Heart right ventricle (tissue), 16 donors: ENCODE measurements at regions of chr6 and their contacts with region 1.

Region 1: GRCh38 chr6:16964553-16965501 is 137.0 kb upstream of the STMND1 start:
- DNase-seq: peak; percentile 62 to 70
- ATAC-seq: peak; percentile 59 to 95 (median 92)
- H3K4me3 ChIP-seq: no peak overlapping the region
- H3K27ac ChIP-seq: no peak overlapping the region
- H3K4me1 ChIP-seq: peaks cover 0 to 7% (median 5%) of the 10 kb centered on the region in 9 donors
- H3K27me3 ChIP-seq: peaks cover 0 to 5% (median 0%) of the 10 kb centered on the region in 7 donors
- CTCF ChIP-seq: peak; percentile 75 to 94 (median 87)

Region 2: GRCh38 chr6:16332175-16332542 is 632.7 kb before region 1 on chr6:
- intact Hi-C with region 1: loop called in 4 of 10 experiments (anchors 10 kb)
- DNase-seq: peak; percentile 56 to 86
- ATAC-seq: peak; percentile 68 to 93 (median 80)
- H3K4me3 ChIP-seq: peak overlapping the region in 2 of 10 donors; percentile 0 to 24
- H3K27ac ChIP-seq: peak overlapping the region in 5 of 10 donors; percentile 1 to 41 (median 31)
- H3K4me1 ChIP-seq: peaks cover 7 to 61% (median 39%) of the 10 kb centered on the region in 9 donors
- H3K27me3 ChIP-seq: no peaks in the 10 kb centered on the region
- CTCF ChIP-seq: peak; percentile 84 to 95 (median 92)

Region 3: DNA sequence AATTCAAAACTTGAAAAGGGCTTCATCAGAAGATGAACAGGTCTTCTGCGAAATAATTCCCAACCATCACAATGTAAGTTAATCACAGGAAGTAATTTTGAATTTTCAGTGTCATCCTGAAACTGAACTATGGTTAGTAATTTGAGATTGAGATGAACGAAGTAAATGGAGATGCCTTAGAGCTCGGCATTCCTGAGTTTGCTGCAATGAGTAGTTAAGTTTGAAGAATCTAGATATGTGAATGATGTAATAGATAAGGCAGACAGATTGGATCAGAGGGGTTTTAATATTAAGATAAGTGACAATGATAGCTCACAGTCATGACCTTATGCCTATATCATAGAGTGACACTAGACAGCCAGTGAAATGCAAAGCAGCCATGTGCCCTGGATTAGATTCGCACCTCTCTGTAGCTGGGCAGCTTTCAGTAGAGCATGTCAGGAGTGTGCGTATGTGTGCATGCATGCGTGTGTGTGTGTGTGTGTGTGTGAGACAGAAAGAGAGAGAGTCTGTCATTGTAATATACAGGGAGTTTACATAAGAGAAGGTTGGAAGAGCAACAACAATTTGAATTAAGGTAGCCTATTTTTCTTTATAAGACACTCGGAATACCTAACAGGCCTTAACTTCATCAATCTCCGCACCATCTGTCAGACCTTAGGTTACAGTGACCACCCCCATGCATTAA is 493.5 kb before region 1 on chr6:
- intact Hi-C with region 1: no loop called
- DNase-seq: no peak
- ATAC-seq: no peak
- H3K4me3 ChIP-seq: no peak overlapping the region
- H3K27ac ChIP-seq: no peak overlapping the region
- H3K4me1 ChIP-seq: peaks cover 0 to 18% (median 10%) of the 10 kb centered on the region in 9 donors
- H3K27me3 ChIP-seq: no peaks in the 10 kb centered on the region
- CTCF ChIP-seq: no peak

Region 4: DNA sequence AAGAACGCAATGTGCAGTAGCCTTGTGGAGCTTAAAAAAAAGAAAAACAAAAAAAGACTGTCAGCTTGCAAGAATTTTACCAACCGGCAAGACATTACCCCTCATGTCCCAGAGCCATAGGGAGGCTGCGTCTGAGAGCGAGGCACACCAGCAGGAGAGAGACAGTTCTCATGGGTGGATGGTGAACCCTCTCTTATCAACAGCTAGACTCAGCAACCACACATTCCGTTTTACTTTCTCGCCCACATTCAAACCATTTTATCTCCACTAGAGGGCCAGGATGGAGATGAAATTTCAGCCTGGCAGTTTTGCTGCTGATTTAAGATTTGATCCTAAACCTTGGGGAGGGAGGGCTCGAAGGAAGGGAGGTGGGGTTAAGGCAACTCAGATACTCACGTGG is 450.6 kb before region 1 on chr6:
- intact Hi-C with region 1: loop called in 4 of 10 experiments (anchors 10 kb)
- DNase-seq: no peak
- ATAC-seq: peak in 5 of 8 donors; percentile 10 to 51 (median 34)
- H3K4me3 ChIP-seq: no peak overlapping the region
- H3K27ac ChIP-seq: no peak overlapping the region
- H3K4me1 ChIP-seq: peaks cover 4 to 57% (median 39%) of the 10 kb centered on the region in 9 donors
- H3K27me3 ChIP-seq: no peaks in the 10 kb centered on the region
- CTCF ChIP-seq: peak in 7 of 9 donors; percentile 36 to 54 (median 51)

Region 5: GRCh38 chr6:16770701-16771569 is 193.9 kb before region 1 on chr6:
- intact Hi-C with region 1: loop called in 6 of 10 experiments (anchors 5 to 10 kb)
- DNase-seq: peak; percentile 76 to 83
- ATAC-seq: peak; percentile 70 to 92 (median 88)
- H3K4me3 ChIP-seq: no peak overlapping the region
- H3K27ac ChIP-seq: peak overlapping the region in 3 of 10 donors; percentile 20 to 61 (median 47)
- H3K4me1 ChIP-seq: peaks cover 0 to 46% (median 32%) of the 10 kb centered on the region in 9 donors
- H3K27me3 ChIP-seq: no peaks in the 10 kb centered on the region
- CTCF ChIP-seq: peak; percentile 91 to 98 (median 95)

Region 6: GRCh38 chr6:16776394-16777017 is 188.3 kb before region 1 on chr6:
- intact Hi-C with region 1: loop called in 5 of 10 experiments (anchors 5 to 10 kb)
- DNase-seq: no peak
- ATAC-seq: no peak
- H3K4me3 ChIP-seq: no peak overlapping the region
- H3K27ac ChIP-seq: no peak overlapping the region
- H3K4me1 ChIP-seq: peaks cover 0 to 15% (median 4%) of the 10 kb centered on the region in 9 donors
- H3K27me3 ChIP-seq: no peaks in the 10 kb centered on the region
- CTCF ChIP-seq: no peak

Region 7: DNA sequence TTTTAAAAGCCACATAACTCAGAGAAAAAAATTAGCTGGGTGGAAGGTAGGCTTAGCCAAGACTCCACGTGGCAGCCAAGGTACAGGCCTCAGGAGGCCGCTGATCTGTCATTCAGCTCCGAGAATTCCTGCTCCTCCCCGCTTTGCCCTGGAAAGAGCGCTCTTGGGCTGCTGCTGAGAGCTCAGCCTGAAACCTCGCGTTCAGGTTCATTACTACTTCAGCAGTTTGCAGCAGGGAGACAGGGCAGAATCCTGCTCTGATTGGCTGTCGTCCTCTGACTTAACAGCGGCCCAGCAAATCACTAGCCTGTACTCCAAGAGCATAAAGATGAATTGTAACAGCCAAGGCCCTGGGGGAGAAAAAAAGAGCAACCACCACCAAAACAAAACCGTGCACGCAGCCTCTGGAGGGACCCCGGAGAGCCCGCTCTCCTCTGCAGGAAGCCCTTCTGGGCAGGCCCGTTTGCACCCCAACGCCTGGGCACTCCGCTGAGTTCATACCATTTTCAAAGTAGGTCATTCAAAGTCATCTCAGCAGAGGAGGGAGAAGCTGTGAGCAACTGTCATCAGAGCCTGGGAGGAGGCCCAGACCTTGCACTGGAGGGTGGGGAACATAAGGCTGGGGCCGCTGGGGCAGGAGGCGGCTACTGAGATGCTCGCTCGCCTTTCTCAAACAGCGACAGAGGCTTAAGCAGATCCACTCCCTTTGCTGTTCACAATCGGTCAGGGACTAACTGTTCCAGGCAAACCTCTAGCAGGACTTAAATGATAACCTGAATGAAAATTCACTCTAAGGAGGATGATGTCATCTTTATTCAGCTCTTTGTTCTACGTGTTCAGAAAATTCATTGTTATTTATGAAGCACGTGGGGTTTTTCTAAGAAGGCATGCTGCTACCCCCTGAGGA is 161.3 kb before region 1 on chr6:
- intact Hi-C with region 1: loop called in 1 of 10 experiments (anchors 10 kb)
- DNase-seq: peak; percentile 34 to 69
- ATAC-seq: peak; percentile 80 to 93 (median 90)
- H3K4me3 ChIP-seq: peak overlapping the region in 8 of 10 donors; percentile 17 to 49 (median 44)
- H3K27ac ChIP-seq: peak overlapping the region; percentile 12 to 87 (median 81)
- H3K4me1 ChIP-seq: peaks cover 3 to 69% (median 51%) of the 10 kb centered on the region in 9 donors
- H3K27me3 ChIP-seq: no peaks in the 10 kb centered on the region
- CTCF ChIP-seq: peak in 2 of 9 donors; percentile 18 to 23

Region 8: DNA sequence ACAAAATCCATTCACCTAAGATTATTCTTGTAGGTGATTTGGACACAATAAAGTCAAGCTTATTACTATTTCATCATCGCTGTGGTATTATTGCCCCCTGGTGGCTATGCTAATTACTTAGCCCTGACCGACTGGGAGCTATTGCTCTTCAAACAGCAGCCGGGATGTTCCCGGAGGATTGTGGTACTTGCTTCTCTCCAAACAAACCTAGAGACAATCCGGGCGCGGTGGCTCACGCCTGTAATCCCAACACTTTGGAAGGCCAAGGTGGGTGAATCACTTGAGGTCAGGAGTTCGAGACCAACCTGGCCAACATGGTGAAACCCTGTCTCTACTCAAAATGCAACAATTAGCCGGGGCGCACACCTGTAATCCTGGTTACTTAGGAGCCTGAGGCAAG is 121.6 kb after region 1 on chr6:
- intact Hi-C with region 1: loop called in 1 of 10 experiments (anchors 10 kb)
- DNase-seq: peak in 1 of 2 donors; percentile 64
- ATAC-seq: peak; percentile 49 to 86 (median 74)
- H3K4me3 ChIP-seq: no peak overlapping the region
- H3K27ac ChIP-seq: no peak overlapping the region
- H3K4me1 ChIP-seq: peaks cover 0 to 11% (median 0%) of the 10 kb centered on the region in 9 donors
- H3K27me3 ChIP-seq: peaks cover 0 to 9% (median 0%) of the 10 kb centered on the region in 7 donors
- CTCF ChIP-seq: peak; percentile 41 to 78 (median 71)